ENCODE measurements at regions of chr1 and their contacts with region 1.

Region 1: DNA sequence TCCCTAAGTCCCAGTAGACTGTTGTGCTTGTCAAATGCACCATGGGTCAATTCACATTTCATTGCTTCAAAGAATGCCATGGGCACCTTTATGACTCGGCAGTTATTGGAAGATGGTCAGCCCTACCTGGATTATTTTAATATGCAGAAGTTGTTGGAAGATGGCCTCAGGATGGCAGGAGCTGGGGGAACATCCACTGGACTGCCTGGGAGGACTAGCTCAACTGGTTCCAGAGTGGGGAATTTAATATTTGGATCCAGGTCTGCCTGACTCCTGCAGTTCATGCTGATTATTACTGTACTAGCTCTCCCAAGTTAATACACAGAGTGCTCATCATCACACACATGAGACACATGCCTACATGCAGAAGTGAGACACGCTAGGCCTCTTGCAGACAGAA is 65.1 kb downstream of the NKAIN1 start:
- DNase-seq: no peak
- H3K4me3 ChIP-seq: no peak overlapping the region
- H3K27ac ChIP-seq: no peak overlapping the region
- H3K4me1 ChIP-seq: peaks cover 8% of the 10 kb centered on the region
- H3K27me3 ChIP-seq: no peaks in the 10 kb centered on the region
- CTCF ChIP-seq: no peak

Region 2: GRCh38 chr1:31880890-31881687 is 706.5 kb after region 1 on chr1:
- CTCF ChIA-PET with region 1: no interaction called
- POLR2A ChIA-PET with region 1: interaction called, 13 read pairs
- intact Hi-C with region 1: no loop called
- DNase-seq: no peak
- H3K4me3 ChIP-seq: no peak overlapping the region
- H3K27ac ChIP-seq: no peak overlapping the region
- H3K4me1 ChIP-seq: no peaks in the 10 kb centered on the region
- H3K27me3 ChIP-seq: no peaks in the 10 kb centered on the region
- CTCF ChIP-seq: no peak

Measured in A673 (cell line).